ENCODE measurements at regions of chr20 and their contacts with region 1.

Region 1: DNA sequence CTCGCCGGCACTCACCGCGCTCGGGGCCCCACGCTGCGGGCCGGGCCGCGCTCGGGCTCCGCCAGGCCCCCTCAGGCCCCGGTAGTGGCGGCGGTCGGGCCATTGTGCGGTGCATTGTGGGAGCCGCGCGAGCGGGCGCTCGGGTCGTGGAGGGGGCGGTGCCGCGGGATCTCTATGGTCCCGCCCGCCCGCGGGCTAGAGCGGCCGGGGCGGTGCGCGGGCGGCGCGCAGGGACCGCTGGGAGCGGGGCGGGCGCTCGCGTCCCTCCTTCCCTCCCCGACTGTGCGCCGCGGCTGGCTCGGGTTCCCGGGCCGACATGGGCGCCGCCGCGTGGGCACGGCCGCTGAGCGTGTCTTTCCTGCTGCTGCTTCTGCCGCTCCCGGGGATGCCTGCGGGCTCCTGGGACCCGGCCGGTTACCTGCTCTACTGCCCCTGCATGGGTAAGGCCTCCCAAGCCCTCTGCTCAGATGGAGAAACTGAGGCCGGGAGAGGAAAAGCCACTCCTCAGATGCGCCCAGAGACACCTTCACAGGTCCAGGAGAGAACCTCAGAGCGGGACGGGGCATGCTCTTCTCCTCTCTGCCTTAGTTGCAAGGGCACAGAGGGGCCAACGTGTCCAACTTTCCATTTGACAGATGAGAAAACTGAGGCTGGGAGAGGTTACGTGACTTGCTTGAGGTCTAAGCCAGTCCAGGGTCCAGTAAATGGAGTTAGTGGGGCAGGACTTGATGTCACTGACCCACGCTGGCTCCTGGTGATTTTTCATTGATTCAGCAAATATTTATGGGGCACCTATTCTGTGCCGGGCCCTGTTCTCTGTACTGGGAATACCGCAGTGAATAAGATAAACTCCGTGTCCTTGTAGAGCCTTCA is at the starts of genes PLAGL2 and POFUT1:
- DNase-seq: peak; percentile 96
- ATAC-seq: peak; percentile 98
- total RNA-seq, gene PLAGL2: 6.0 TPM
- total RNA-seq, gene POFUT1: 24.5 TPM

Region 2: DNA sequence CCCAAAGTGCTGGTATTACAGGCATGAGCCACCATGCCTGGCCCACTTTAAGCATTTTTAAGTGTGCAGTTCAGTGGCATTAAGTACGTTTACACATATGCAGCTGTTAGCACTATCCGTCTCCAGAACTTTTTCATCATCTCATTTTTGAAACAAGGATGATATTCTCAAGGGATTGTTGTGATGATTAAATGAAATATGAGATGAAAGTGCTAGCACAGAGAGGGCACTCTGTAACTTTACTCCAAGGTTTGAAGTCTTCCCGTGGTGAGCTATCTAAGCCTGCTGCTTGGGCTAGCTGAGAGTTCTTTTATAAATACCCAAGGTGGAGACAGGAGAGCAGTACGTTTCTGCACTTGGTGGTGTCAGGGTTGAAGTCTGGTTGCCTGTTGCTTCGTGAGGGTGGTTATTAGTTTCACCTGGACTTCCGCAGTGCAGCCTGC is 91.8 kb before region 1 on chr20:
- intact Hi-C with region 1: loop called (anchors 5 kb)
- DNase-seq: no peak
- ATAC-seq: no peak

Region 3: GRCh38 chr20:32285621-32286371 is 77.9 kb after region 1 on chr20:
- intact Hi-C with region 1: loop called (anchors 5 kb)
- DNase-seq: no peak
- ATAC-seq: peak; percentile 39

Measured in Right ventricle myocardium inferior (tissue), 1 donor.